ENCODE measurements at regions of chr4 and their contacts with region 1.

Region 1: GRCh38 chr4:150242820-150243458 is 164.7 kb downstream of the DCLK2 start:
- DNase-seq: peak in 1 of 10 donors; percentile 20
- H3K4me3 ChIP-seq: no peak overlapping the region
- H3K27ac ChIP-seq: no peak overlapping the region
- H3K27me3 ChIP-seq: no peaks in the 10 kb centered on the region
- CTCF ChIP-seq: peak; percentile 72 to 94 (median 88)

Region 2: GRCh38 chr4:149999485-150000074 is 243.4 kb before region 1 on chr4:
- intact Hi-C with region 1: loop called in 1 of 2 experiments (anchors 1 kb)
- DNase-seq: peak in 4 of 10 donors; percentile 5 to 57 (median 32)
- H3K4me3 ChIP-seq: peak overlapping the region in 1 of 59 donors; percentile 4
- H3K27ac ChIP-seq: no peak overlapping the region
- H3K27me3 ChIP-seq: no peaks in the 10 kb centered on the region
- CTCF ChIP-seq: peak; percentile 54 to 92 (median 78)

Region 3: DNA sequence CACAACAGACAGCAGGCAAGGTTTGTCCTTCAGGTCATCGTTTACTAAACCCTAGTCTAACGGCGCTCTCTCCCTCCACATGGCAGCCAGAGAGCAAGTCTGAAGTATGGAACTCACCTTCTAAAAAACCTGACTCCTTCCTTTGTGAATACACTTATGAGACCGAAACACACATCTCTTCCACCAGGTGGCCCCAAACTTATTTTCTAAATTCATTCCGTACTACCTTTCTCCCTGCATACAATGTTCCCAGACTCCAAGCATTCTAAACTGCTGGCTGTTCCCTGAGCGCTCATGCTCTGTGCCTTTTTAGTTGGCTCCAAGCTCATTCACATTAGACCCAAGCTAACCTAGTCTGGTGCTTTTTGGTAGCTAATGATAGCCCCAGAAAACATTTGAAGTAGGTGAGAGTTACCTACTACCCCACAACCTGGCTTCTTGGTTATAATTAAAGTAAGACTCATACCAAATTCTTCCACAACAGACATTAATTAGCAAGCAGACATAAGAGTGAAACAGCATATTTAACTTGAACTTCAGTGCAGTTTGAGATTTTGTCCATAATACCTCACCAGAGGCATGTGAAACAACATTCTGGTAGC is 232.3 kb before region 1 on chr4:
- intact Hi-C with region 1: loop called in 1 of 2 experiments (anchors 5 kb)
- DNase-seq: peak in 4 of 10 donors; percentile 5 to 60 (median 21)
- H3K4me3 ChIP-seq: no peak overlapping the region
- H3K27ac ChIP-seq: no peak overlapping the region
- H3K27me3 ChIP-seq: peaks cover 0 to 3% (median 0%) of the 10 kb centered on the region in 45 donors
- CTCF ChIP-seq: peak; percentile 41 to 78 (median 60)

Region 4: GRCh38 chr4:150078637-150079581 is 164.0 kb before region 1 on chr4:
- intact Hi-C with region 1: loop called in 1 of 2 experiments (anchors 10 kb)
- DNase-seq: peak in 8 of 10 donors; percentile 31 to 58 (median 42)
- H3K4me3 ChIP-seq: peak overlapping the region; percentile 60 to 93 (median 82)
- H3K27ac ChIP-seq: peak overlapping the region in 58 of 59 donors; percentile 11 to 92 (median 81)
- H3K27me3 ChIP-seq: no peaks in the 10 kb centered on the region
- CTCF ChIP-seq: no peak

Region 5: GRCh38 chr4:150164956-150165629 is 77.8 kb before region 1 on chr4:
- intact Hi-C with region 1: no loop called
- DNase-seq: no peak
- H3K4me3 ChIP-seq: no peak overlapping the region
- H3K27ac ChIP-seq: no peak overlapping the region
- H3K27me3 ChIP-seq: no peaks in the 10 kb centered on the region
- CTCF ChIP-seq: no peak

Measured in dorsolateral prefrontal cortex (tissue), 120 donors.